B cell (primary cell): ENCODE measurements at regions of chr12 and their contacts with region 1.

Region 1: DNA sequence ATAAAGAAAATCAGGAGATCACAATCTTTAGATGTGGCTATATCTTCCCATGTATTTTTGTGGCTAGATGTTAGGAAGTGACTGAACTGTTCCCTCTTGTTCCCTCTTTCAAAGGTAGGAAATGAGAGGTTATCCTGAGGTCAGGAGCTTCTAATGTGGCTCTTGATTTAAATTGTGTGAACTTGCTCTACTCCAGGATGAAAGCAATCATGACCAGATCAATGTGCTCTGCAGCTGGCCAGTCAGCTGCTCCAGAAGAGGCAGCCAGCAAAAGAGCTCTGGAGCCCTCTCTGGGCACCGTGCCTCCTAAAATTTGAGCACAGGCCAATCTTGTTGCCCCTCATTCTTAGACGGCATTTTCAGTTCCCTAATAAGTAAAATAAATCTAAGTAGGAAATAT is 32.0 kb downstream of the CDK17 start:
- DNase-seq: no peak
- ATAC-seq: no peak
- H3K4me3 ChIP-seq: no peak overlapping the region
- H3K4me3 Mint-ChIP-seq: no peak overlapping the region
- H3K27ac ChIP-seq: no peak overlapping the region
- H3K27ac Mint-ChIP-seq: no peak overlapping the region
- H3K4me1 ChIP-seq: peaks cover 3 to 11% of the 10 kb centered on the region in 2 donors
- H3K4me1 Mint-ChIP-seq: peaks cover 54% of the 10 kb centered on the region
- H3K27me3 ChIP-seq: no peaks in the 10 kb centered on the region
- H3K27me3 Mint-ChIP-seq: no peaks in the 10 kb centered on the region
- CTCF ChIP-seq: no peak

Region 2: GRCh38 chr12:96327346-96327745 is 40.9 kb before region 1 on chr12:
- CTCF ChIA-PET with region 1: no interaction called
- POLR2A ChIA-PET with region 1: no interaction called
- intact Hi-C with region 1: loop called (anchors 5 kb)
- DNase-seq: peak; percentile 56
- ATAC-seq: peak; percentile 88
- H3K4me3 ChIP-seq: no peak overlapping the region
- H3K4me3 Mint-ChIP-seq: peak overlapping the region; percentile 16
- H3K27ac ChIP-seq: peak overlapping the region; percentile 11 to 58
- H3K27ac Mint-ChIP-seq: peak overlapping the region; percentile 76
- H3K4me1 ChIP-seq: peaks cover 29 to 33% of the 10 kb centered on the region in 2 donors
- H3K4me1 Mint-ChIP-seq: peaks cover 50% of the 10 kb centered on the region
- H3K27me3 ChIP-seq: no peaks in the 10 kb centered on the region
- H3K27me3 Mint-ChIP-seq: no peaks in the 10 kb centered on the region
- CTCF ChIP-seq: no peak

Region 3: DNA sequence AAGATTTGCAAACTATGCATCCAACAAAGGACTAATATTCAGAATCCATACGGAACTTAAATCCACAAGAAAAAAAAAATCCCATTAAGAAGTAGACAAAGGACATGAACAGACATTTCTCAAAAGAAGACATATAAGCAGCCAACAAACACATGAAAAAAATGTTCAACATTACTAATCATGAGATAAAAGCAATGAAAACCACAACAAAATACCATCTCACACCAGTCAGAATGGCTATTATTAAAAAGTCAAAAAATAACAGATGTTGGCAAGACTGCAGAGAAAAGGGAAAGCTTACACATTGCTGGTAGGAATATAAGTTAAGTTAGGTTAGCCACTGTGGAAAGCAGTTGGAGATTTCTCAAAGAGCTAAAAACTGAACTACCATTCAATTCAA is 15.8 kb after region 1 on chr12:
- CTCF ChIA-PET with region 1: no interaction called
- POLR2A ChIA-PET with region 1: no interaction called
- intact Hi-C with region 1: no loop called
- DNase-seq: no peak
- ATAC-seq: no peak
- H3K4me3 ChIP-seq: no peak overlapping the region
- H3K4me3 Mint-ChIP-seq: no peak overlapping the region
- H3K27ac ChIP-seq: no peak overlapping the region
- H3K27ac Mint-ChIP-seq: no peak overlapping the region
- H3K4me1 ChIP-seq: peaks cover 23% of the 10 kb centered on the region in 2 donors
- H3K4me1 Mint-ChIP-seq: peaks cover 67% of the 10 kb centered on the region
- H3K27me3 ChIP-seq: no peaks in the 10 kb centered on the region
- H3K27me3 Mint-ChIP-seq: no peaks in the 10 kb centered on the region
- CTCF ChIP-seq: no peak

Region 4: DNA sequence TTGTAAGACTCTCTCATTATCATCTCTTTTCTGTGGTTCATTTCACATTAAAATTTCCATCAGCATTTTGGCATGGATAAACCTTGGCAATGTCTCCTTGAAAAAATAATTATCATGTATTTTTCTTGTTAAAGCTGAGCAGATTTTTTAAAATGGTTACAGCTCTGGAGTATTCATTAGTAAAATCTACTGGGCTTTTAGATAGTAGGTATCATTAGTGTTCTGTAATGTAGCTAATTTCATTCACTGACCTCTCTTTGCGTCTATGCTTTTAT is 68.9 kb after region 1 on chr12:
- CTCF ChIA-PET with region 1: no interaction called
- POLR2A ChIA-PET with region 1: interaction called, 10 read pairs
- intact Hi-C with region 1: no loop called
- DNase-seq: no peak
- ATAC-seq: no peak
- H3K4me3 ChIP-seq: no peak overlapping the region
- H3K4me3 Mint-ChIP-seq: no peak overlapping the region
- H3K27ac ChIP-seq: no peak overlapping the region
- H3K27ac Mint-ChIP-seq: no peak overlapping the region
- H3K4me1 ChIP-seq: peaks cover 0 to 4% of the 10 kb centered on the region in 2 donors
- H3K4me1 Mint-ChIP-seq: peaks cover 5% of the 10 kb centered on the region
- H3K27me3 ChIP-seq: no peaks in the 10 kb centered on the region
- H3K27me3 Mint-ChIP-seq: no peaks in the 10 kb centered on the region
- CTCF ChIP-seq: no peak